ENCODE measurements at regions of chr11 and their contacts with region 1.

Region 1: GRCh38 chr11:104254347-104254746 is 90.4 kb upstream of the PDGFD start:
- DNase-seq: peak; percentile 85
- ATAC-seq: peak; percentile 100
- H3K4me3 Mint-ChIP-seq: no peak overlapping the region
- H3K27ac Mint-ChIP-seq: no peak overlapping the region
- H3K4me1 Mint-ChIP-seq: 0 out of 2 replicates have a peak, but pooled peaks cover 2% of the 10 kb centered on the region
- H3K27me3 Mint-ChIP-seq: no peaks in the 10 kb centered on the region
- CTCF ChIP-seq: peak; percentile 85

Region 2: DNA sequence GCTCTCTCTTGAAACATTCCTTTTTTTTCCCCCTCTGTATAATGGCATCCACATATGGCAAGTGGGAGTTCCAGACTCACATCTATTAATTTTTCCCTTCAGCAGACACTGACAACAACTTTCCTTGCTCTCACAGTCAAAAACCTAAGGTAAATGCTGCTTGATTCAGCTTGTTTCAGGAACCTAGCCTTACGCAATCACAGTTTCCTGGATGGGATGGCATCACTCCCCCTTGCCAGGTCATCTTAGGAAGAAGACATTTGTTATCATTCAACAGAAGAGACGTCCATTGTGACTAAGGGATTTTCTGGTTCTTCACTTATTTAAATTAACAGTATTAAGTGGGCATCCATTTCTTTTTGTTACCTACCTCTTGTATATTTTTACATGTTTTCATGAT is 21.6 kb after region 1 on chr11:
- CTCF ChIA-PET with region 1: interaction called, 14 read pairs
- POLR2A ChIA-PET with region 1: no interaction called
- DNase-seq: no peak
- ATAC-seq: no peak
- H3K4me3 Mint-ChIP-seq: no peak overlapping the region
- H3K27ac Mint-ChIP-seq: 0 out of 2 replicates have a peak overlapping the region, but pooled peaks have one; percentile 11
- H3K4me1 Mint-ChIP-seq: 0 out of 2 replicates have a peak, but pooled peaks cover 3% of the 10 kb centered on the region
- H3K27me3 Mint-ChIP-seq: no peaks in the 10 kb centered on the region
- CTCF ChIP-seq: no peak

Region 3: GRCh38 chr11:104332110-104332509 is 77.8 kb after region 1 on chr11:
- CTCF ChIA-PET with region 1: interaction called, 12 read pairs
- POLR2A ChIA-PET with region 1: interaction called, 4 read pairs
- DNase-seq: peak; percentile 81
- ATAC-seq: peak; percentile 99
- H3K4me3 Mint-ChIP-seq: no peak overlapping the region
- H3K27ac Mint-ChIP-seq: no peak overlapping the region
- H3K4me1 Mint-ChIP-seq: peaks cover 5% of the 10 kb centered on the region; the same call in 1 of the 2 replicates
- H3K27me3 Mint-ChIP-seq: no peaks in the 10 kb centered on the region
- CTCF ChIP-seq: peak; percentile 78

Region 4: DNA sequence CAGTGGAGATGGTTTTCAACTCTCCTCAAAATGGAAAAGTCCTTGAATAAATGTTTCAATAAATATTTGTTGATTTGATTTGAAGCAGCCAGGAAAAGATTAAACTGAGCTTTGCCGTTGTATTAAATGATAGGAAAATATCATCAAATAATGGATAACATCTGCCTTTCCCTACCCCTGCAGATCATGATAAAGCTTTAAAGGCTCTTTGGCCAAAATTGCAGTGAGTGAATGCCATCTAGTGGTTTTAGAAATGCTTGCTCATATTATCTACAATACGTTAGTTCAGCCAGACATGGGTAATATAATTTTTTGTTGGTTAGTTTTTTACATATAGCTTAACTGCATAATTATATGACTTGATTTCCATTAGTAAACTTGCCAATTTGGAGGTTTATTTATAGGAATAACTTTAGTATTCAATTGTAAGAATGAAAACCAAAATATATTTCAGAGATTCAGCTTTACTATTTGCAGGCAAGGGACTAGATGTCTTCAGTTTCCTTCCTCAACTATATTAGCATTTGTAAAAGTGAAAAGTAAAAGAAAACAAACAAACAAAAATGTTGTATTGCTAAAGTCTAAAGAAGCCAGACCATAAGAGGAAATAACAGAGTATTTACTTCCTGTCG is 1608.5 kb after region 1 on chr11:
- CTCF ChIA-PET with region 1: interaction called, 10 read pairs
- POLR2A ChIA-PET with region 1: no interaction called
- DNase-seq: no peak
- ATAC-seq: peak; percentile 68
- H3K4me3 Mint-ChIP-seq: no peak overlapping the region
- H3K27ac Mint-ChIP-seq: no peak overlapping the region
- H3K4me1 Mint-ChIP-seq: peaks cover 25% of the 10 kb centered on the region
- H3K27me3 Mint-ChIP-seq: no peaks in the 10 kb centered on the region
- CTCF ChIP-seq: peak; percentile 40